ENCODE measurements at regions of chr14 and their contacts with region 1.

Region 1: DNA sequence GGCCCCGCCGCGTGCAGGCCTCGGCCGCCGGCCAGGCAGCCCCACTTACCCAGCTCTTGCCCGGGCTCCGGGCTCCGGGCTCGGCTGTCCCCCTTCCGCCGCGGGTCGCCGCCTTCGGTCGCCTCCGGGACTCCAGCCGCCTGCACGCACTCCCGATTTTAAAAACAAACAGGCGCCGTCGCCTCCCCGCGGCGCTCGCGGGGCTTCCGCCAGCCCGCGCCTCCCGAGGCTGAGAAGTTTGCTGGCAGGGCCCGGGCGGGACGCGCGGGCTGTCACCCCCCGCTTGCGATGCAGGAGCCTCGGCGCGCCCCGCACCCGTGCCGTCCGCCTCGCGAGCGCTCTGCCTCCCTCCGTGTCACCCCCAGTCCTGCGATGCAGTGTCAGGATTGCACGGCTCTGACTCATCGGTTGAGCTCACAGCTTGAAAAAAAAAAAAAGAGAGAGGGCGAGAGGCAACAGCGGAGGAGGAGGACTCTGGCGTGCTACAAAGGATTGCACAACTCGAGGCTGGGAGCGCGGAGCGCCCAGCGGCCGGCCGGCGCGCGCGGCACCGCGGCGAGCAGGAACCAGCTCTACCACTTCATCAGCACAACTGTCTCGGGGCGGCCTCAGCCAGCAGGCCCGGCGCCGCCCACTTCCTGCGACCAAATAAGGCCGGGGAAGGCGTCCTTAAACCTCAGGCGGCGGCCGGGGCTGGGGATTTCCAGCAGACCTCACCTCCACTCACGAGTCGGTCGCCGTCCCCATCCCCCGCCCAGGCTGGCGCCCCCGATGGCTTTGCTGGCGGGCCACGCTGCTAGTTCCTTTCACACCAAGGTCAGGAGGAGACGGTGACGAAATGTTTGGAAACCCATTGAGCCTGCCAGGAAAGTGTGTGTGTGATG is 45.8 kb upstream of the PNMA1 start:
- DNase-seq: peak; percentile 94
- H3K27ac ChIP-seq: peak overlapping the region; percentile 98
- CTCF ChIP-seq: no peak

Region 2: DNA sequence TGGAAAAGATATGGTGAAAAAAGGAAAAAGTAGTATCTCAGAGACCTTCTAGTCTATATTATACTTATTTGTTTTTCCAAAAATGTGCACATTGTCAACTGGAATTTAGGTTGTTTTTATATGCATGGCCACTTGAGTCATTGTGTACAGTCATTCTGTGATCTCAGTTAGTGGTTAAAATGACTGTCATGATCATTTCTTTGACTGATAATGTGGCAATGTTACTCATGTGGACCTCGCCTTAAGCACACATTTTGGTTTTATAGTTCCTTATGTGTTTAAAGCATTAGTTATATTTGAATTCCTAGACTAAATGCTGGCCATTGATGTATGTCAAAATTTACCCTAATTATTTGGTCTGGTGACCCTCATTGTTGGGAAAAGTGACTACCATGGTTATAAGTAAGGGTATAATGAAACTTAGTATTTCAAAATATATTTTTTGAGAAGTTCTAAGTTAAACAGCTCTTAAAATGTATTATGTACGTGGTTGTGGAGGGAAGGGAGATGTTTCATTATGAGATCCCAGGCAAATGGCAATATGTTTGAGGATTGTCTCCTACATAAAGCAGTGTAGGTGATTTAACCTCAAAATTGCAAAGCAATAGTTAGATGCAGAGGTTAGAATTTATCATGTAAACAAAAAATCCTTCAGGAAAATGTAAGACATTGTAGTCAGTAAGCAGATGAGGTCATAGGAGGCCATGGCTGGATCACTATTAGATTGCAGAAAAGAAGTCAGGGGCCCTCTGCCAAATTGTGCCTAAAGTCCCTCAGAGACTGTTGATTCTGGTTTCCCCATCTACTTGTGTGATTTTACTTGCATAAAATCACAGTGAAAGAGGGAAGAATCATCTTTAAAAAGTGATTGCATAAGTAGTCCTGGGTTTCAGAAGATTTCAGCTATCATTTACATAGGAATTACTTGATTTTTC is 63.2 kb before region 1 on chr14:
- CTCF ChIA-PET with region 1: no interaction called
- POLR2A ChIA-PET with region 1: no interaction called
- DNase-seq: peak; percentile 35
- H3K27ac ChIP-seq: no peak overlapping the region
- CTCF ChIP-seq: no peak

Region 3: DNA sequence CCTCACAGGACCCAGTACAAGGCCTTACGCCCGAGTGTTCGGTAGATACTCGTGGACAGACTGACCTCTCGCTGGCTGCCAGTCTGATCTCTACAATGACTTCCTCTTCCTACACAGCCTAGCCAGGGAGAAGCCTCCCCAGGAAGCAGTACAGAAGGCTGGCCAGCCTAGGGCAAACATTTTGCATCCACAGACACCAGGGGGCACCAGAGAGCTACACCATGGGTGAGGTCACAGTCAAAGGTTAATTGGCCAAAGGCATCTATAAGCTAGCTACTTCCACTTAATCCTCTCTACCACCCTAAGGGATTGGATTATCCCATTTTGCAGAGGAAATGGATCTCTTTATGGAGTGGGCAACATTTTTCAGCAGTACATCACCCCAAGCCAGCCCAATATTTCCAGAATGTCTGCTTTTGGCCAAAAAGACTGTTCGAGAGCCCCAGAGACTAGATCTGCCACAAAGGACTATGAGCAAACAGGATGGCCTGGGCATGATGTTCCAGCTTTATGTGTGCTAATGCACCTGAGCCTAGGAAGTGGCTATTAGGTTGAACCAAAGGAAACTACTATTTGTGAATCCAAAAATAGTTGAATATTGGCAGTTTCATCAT is 31.1 kb before region 1 on chr14:
- CTCF ChIA-PET with region 1: interaction called, 29 read pairs
- POLR2A ChIA-PET with region 1: interaction called, 4 read pairs
- DNase-seq: peak; percentile 76
- H3K27ac ChIP-seq: peak overlapping the region; percentile 93
- CTCF ChIP-seq: peak; percentile 87

Region 4: DNA sequence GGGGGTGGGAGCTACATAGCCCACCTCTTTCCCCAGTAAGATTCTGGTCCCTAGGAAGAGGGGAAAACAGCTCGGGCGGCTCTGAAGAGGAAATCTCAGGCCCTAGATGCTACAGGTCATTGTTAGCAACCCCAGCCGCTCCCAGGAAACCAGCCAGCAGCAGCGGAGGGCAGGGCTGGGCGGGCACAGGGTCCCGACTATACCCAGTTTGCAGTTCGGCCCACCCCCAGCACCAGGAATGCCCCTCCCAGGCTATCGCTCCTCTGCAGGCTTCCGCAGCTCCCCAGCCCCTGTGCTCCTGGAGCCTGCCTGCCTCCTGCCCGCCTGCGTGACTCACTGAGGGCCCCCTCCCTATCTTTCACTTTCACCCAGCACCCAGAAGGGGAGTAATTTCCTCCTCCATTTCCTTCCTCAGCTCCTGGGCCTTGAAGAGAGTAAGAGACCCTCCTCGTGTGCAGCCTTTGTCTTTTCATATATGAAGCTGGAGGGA is 18.5 kb before region 1 on chr14:
- CTCF ChIA-PET with region 1: interaction called, 14 read pairs
- POLR2A ChIA-PET with region 1: interaction called, 5 read pairs
- DNase-seq: peak; percentile 91
- H3K27ac ChIP-seq: peak overlapping the region; percentile 99
- CTCF ChIP-seq: no peak

Region 5: GRCh38 chr14:73785873-73786695 is 26.1 kb after region 1 on chr14:
- CTCF ChIA-PET with region 1: interaction called, 11 read pairs
- POLR2A ChIA-PET with region 1: interaction called, 16 read pairs
- DNase-seq: peak; percentile 78
- H3K27ac ChIP-seq: peak overlapping the region; percentile 99
- CTCF ChIP-seq: peak; percentile 19; the same call in 1 of the 2 replicates

Region 6: DNA sequence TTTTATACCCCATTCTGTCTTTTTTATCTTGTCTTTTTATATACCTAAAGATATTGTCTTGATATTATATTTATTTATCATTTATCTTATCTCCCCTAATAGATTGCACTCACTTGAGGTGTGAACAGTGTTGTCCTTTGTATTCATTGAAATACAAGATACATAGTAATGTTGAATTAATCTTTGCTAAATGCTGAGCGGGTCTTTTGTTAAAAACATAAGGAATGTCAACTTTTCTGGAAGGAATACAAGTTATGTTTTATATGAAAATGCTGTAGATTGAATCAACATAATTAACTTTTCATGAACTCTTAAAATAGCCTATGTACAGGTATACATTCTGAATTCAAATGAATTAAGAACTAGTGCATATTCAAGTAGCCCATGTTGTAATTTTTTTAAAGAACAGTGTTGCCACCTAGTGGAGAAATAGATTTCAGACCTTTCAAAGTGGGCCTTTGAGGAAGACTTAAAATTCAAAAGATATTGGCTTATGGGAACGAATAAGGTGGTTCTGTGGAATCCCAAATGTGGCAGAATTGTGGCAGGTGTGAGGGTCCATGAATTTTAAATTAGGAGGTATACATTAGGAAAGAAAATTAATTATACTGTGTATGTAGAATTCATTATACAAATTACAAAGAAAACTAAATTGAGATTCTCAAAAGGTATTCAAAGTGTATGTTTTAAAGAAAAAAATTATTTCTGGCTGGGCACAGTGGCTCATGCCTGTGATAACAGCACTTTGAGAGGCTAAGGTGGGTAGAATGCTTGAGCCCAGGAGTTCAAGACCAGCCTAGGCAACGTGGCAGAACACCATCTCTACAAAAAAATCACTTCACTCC is 278.3 kb after region 1 on chr14:
- CTCF ChIA-PET with region 1: no interaction called
- POLR2A ChIA-PET with region 1: no interaction called
- DNase-seq: peak; percentile 50
- H3K27ac ChIP-seq: no peak overlapping the region
- CTCF ChIP-seq: peak; percentile 77

Region 7: GRCh38 chr14:74109369-74109768 is 349.4 kb after region 1 on chr14:
- CTCF ChIA-PET with region 1: no interaction called
- POLR2A ChIA-PET with region 1: no interaction called
- DNase-seq: no peak
- H3K27ac ChIP-seq: no peak overlapping the region
- CTCF ChIP-seq: no peak

Region 8: DNA sequence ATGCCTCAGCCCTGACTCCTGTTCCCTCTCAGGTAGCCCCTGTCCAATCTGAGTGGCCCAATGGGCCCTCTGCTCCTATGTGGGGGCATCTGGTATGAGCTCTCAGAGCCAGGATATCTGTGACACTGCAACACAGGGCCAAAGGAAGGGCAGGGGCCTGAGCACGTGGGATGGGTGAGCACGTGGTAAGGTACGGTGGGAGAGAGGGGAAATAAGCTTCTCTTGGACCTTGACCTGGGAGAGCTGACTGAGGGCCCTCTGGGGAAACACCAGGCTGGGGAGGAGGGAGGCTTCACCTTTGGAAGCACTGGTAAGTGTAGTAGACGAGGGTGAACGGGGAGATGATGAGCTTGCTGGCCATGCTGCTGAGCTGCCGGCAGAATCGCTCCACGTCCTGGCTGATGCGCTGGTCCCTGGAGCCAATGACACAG is 536.1 kb after region 1 on chr14:
- CTCF ChIA-PET with region 1: no interaction called
- POLR2A ChIA-PET with region 1: interaction called, 11 read pairs
- DNase-seq: no peak
- H3K27ac ChIP-seq: no peak overlapping the region; the same call in 1 of the 2 replicates
- CTCF ChIP-seq: no peak

Measured in RWPE1 (cell line).